Dendritic cell treated with granulocyte-macrophage colony-stimulating factor and Interleukin-4, amounts not matched to agents 40 ng/mL and 50 ng/mL, for 4 days (primary cell): ENCODE measurements at regions of chr1 and their contacts with region 1.

Region 1: DNA sequence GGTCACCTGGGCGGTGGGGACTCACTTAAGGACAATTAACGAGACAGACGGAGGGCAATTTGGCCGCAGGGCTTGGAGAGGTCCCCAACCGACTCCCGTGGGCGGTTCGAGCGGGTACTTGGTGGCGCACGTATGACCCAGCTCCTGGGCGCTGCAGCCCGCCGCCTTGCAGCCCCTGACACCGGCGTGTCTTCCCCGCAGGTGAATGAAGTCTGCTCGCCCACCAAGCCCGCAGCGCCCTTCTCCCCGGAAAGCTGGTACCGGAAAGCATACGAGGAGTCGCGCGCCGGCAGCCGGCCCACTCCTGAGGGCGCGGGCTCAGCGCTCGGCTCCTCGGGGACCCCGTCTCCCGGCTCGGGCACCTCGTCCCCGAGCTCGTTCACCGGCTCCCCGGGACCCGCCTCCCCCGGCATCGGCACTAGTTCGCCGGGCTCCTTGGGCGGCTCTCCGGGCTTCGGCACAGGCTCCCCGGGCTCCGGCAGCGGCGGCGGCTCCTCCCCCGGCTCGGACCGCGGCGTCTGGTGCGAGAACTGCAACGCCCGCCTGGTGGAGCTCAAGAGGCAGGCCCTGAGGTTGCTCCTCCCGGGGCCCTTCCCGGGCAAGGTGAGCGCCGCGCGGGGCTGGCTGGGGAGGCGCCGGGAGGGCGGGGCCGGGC is 1.4 kb downstream of the KIF26B start:
- H3K4me3 Mint-ChIP-seq: peak overlapping the region; percentile 71
- H3K27ac Mint-ChIP-seq: peak overlapping the region; percentile 47
- H3K4me1 Mint-ChIP-seq: peaks cover 34% of the 10 kb centered on the region
- H3K27me3 Mint-ChIP-seq: peaks cover 84% of the 10 kb centered on the region

Region 2: DNA sequence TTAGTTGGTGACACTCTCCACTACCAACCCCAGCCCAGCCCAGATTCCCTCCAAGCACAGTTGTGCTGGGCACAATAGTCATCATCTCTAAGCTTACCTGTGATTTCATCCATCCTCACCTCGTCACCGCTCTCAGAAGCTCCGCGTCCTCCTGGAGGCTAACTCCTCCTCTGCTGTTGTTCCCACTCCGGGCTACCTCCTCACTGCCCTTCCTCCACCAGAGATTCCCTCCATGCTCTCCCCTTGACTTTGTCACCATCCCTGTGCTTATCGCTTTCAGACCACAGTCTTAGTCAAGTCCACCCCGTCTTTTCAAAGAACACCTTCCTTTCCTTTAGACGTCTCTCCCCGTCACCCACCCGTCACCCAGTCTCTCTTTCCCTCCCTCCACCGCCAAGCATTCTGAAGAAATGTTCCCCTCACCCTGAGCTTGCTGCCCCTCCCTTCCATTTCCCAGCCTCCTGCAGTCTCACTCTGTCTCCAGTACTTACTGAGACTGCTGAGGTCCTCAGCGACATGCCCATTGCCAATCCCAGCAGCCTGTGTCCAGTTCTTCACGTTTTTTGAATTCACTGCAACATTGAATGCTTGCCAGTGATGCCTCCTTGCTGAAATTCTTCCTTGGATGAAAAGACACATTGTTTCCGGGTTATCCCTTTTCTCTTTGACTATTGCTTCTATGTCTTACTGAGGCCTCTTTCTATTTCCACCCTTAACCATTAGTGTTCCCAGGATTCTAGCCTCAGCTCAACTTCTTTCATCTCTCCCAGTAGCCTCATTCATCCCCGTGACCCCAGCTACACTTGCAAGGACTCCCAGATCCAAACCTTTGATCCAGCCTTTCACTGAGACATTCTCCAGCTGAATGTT is 48.2 kb before region 1 on chr1:
- intact Hi-C with region 1: no loop called
- H3K4me3 Mint-ChIP-seq: no peak overlapping the region
- H3K27ac Mint-ChIP-seq: no peak overlapping the region
- H3K4me1 Mint-ChIP-seq: peaks cover 23% of the 10 kb centered on the region
- H3K27me3 Mint-ChIP-seq: no peaks in the 10 kb centered on the region

Region 3: DNA sequence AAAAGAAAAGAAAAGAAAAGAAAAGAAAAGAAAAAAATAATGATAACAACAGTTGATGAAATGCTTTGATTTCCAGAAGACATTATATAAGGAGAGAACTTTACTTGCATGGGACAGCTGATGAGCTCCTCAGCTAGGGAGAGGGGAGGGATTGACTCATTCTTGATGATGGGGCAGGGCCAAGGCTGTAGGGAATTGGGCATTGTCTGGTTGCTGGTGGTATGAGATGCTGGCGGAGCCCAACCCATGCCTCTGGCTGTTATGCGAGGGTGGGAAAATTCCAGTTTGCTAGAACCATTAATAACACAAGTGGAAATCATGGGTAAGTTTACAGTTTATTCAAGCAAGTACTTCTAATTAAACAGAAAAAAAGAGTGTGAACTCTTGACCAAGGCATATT is 37.4 kb before region 1 on chr1:
- intact Hi-C with region 1: no loop called
- H3K4me3 Mint-ChIP-seq: no peak overlapping the region
- H3K27ac Mint-ChIP-seq: no peak overlapping the region
- H3K4me1 Mint-ChIP-seq: no peaks in the 10 kb centered on the region
- H3K27me3 Mint-ChIP-seq: no peaks in the 10 kb centered on the region

Region 4: DNA sequence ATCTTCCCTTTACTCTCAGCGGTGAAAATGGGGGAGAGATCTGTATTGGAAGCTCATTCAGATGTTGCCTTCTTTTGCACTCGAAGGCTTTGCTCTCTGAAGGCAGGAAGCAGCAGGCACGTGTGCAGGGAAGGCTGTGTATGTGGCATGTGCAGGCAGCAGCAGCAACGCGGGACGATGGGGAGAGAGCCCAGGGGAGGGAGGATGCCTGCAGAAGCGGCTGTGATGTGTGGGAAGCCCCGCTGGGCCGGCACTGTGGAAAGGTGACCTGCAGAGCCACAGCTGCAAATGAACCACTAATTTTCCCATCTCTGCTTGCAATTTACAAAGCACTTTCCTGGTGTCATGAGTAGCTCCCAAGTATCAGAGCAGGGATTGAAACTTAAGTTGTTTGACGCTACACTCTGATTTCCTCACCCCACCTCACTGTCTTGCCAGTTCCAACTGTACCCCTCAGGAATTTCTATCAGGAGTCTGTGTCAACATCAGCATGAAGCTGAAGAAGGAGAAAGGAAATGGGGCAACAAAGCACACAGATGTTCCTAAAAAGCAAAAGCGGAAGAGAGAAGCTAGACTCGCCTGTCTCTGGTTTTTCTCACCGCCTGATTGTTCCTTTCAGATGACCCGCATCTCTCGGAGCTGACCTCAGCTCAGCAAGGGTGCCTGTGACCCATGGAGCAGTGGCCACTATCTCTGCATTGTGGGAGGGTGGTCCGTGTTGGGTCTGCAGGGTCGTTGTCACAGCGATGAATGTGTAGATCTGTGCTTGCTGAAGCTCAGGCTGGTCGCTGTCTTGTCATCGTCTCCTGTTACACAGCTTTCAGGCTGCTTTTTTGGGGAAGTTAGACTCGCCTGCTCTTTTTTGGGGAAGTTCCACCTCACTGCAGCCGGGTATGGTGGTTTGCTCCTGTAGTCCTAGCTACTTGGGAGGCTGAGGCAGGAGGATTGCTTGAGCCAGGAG is 154.6 kb after region 1 on chr1:
- intact Hi-C with region 1: loop called (anchors 10 kb)
- H3K4me3 Mint-ChIP-seq: peak overlapping the region; percentile 70
- H3K27ac Mint-ChIP-seq: peak overlapping the region; percentile 83
- H3K4me1 Mint-ChIP-seq: peaks cover 11% of the 10 kb centered on the region
- H3K27me3 Mint-ChIP-seq: peaks cover 64% of the 10 kb centered on the region

Region 5: GRCh38 chr1:245673881-245674414 is 517.7 kb after region 1 on chr1:
- intact Hi-C with region 1: loop called (anchors 10 kb)
- H3K4me3 Mint-ChIP-seq: no peak overlapping the region
- H3K27ac Mint-ChIP-seq: no peak overlapping the region
- H3K4me1 Mint-ChIP-seq: peaks cover 9% of the 10 kb centered on the region
- H3K27me3 Mint-ChIP-seq: no peaks in the 10 kb centered on the region

Region 6: DNA sequence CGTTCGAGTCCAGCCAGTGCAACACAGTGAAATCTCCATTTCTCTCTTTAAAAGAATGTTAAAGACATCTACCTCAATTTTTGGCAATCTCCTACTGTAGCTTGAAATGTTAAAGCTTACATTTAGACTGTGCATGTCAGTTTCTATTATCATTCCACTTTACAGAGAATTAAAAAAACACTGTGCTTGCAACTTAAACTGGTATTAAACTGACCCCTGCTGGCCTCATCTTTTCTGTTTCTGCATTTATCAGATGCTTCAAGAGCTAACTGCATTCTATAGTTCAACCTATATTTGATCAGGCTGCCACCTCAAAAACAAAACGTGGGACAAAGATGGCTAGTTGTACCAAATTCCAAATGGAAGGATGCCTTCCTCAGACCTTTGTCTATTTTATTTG is 1124.3 kb after region 1 on chr1:
- intact Hi-C with region 1: loop called (anchors 5 kb)
- H3K4me3 Mint-ChIP-seq: no peak overlapping the region
- H3K27ac Mint-ChIP-seq: no peak overlapping the region
- H3K4me1 Mint-ChIP-seq: peaks cover 8% of the 10 kb centered on the region
- H3K27me3 Mint-ChIP-seq: no peaks in the 10 kb centered on the region